ENCODE measurements at regions of chr15 and their contacts with region 1.

Region 1: GRCh38 chr15:65304389-65305144 is at the start of gene RNU5B-1:
- DNase-seq: peak; percentile 90
- ATAC-seq: peak; percentile 73
- H3K4me3 Mint-ChIP-seq: peak within 1 kb of the TSS; percentile 92
- H3K27ac Mint-ChIP-seq: peak within 1 kb of the TSS; percentile 95
- H3K4me1 Mint-ChIP-seq: peaks cover 42% of the 10 kb centered on the region
- H3K27me3 Mint-ChIP-seq: no peaks in the 10 kb centered on the region
- total RNA-seq, gene RNU5B-1: 19.9 TPM in 1 of 2 experiments, not detected in the other

Region 2: GRCh38 chr15:64979252-64979710 is 325.3 kb before region 1 on chr15:
- CTCF ChIA-PET with region 1: no interaction called
- POLR2A ChIA-PET with region 1: no interaction called
- DNase-seq: no peak
- ATAC-seq: no peak
- H3K4me3 Mint-ChIP-seq: no peak overlapping the region
- H3K27ac Mint-ChIP-seq: no peak overlapping the region
- H3K4me1 Mint-ChIP-seq: peaks cover 10% of the 10 kb centered on the region
- H3K27me3 Mint-ChIP-seq: no peaks in the 10 kb centered on the region

Region 3: DNA sequence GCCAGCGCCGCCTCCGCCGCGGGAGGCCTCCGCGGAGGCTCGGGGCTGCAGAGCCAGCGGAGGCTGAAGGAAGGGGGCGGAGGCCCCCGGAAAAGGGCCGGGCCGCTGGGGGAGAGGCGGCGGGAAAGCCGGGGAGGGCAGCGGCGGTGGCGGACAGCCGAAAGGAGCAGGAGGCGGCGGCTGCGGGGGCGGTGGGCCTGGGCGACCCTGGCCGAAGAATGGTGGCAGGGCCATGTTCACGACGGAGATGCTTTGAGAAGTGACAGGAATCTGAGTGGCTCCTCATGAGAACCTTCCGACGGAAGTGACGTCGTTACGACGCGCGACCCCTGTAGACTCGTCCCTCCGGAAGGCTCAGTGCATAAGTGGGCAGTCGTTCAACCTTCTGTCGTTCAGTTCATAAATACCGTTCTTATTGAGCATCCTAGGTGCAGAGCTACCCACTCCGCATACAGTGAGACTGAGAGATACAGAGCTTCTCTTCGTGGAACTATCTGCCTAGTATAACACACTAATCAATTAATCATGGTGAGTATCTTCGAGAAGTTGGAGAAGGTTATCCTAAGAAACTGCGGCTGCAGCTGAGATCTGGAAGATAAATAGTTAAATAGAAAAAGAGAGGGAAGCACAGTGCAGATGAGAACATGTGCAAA is 170.9 kb before region 1 on chr15 and contains the start of gene PDCD7:
- CTCF ChIA-PET with region 1: no interaction called
- POLR2A ChIA-PET with region 1: interaction called, 11 read pairs
- DNase-seq: peak; percentile 93
- ATAC-seq: peak; percentile 95
- H3K4me3 Mint-ChIP-seq: peak within 1 kb of the TSS; percentile 90
- H3K27ac Mint-ChIP-seq: peak within 1 kb of the TSS; percentile 97
- H3K4me1 Mint-ChIP-seq: peaks cover 19% of the 10 kb centered on the region
- H3K27me3 Mint-ChIP-seq: no peaks in the 10 kb centered on the region
- total RNA-seq, gene PDCD7: 31.5 to 34.9 TPM

Region 4: GRCh38 chr15:65233696-65234095 is 70.9 kb before region 1 on chr15:
- CTCF ChIA-PET with region 1: no interaction called
- POLR2A ChIA-PET with region 1: no interaction called
- DNase-seq: no peak
- ATAC-seq: no peak
- H3K4me3 Mint-ChIP-seq: no peak overlapping the region
- H3K27ac Mint-ChIP-seq: no peak overlapping the region
- H3K4me1 Mint-ChIP-seq: no peaks in the 10 kb centered on the region
- H3K27me3 Mint-ChIP-seq: no peaks in the 10 kb centered on the region

Region 5: GRCh38 chr15:65286704-65287519 is 17.7 kb before region 1 on chr15 and contains the start of gene PARP16:
- CTCF ChIA-PET with region 1: interaction called, 11 read pairs
- POLR2A ChIA-PET with region 1: interaction called, 115 read pairs
- DNase-seq: peak; percentile 95
- ATAC-seq: peak; percentile 98
- H3K4me3 Mint-ChIP-seq: peak within 1 kb of the TSS; percentile 86
- H3K27ac Mint-ChIP-seq: peak within 1 kb of the TSS; percentile 80
- H3K4me1 Mint-ChIP-seq: peaks cover 29% of the 10 kb centered on the region
- H3K27me3 Mint-ChIP-seq: no peaks in the 10 kb centered on the region
- total RNA-seq, gene PARP16: 17.0 to 19.3 TPM

Region 6: GRCh38 chr15:65318870-65319356 is 14.3 kb after region 1 on chr15:
- CTCF ChIA-PET with region 1: interaction called, 11 read pairs
- POLR2A ChIA-PET with region 1: interaction called, 43 read pairs
- DNase-seq: peak; percentile 82
- ATAC-seq: peak; percentile 99
- H3K4me3 Mint-ChIP-seq: no peak overlapping the region
- H3K27ac Mint-ChIP-seq: no peak overlapping the region
- H3K4me1 Mint-ChIP-seq: no peaks in the 10 kb centered on the region
- H3K27me3 Mint-ChIP-seq: peaks cover 14% of the 10 kb centered on the region

Region 7: GRCh38 chr15:65869127-65869953 is 564.8 kb after region 1 on chr15 and contains the start of gene RAB11A:
- CTCF ChIA-PET with region 1: no interaction called
- POLR2A ChIA-PET with region 1: interaction called, 10 read pairs
- DNase-seq: peak; percentile 98
- ATAC-seq: peak; percentile 94
- H3K4me3 Mint-ChIP-seq: peak within 1 kb of the TSS; percentile 99
- H3K27ac Mint-ChIP-seq: peak within 1 kb of the TSS; percentile 94
- H3K4me1 Mint-ChIP-seq: peaks cover 28% of the 10 kb centered on the region
- H3K27me3 Mint-ChIP-seq: peaks cover 4% of the 10 kb centered on the region
- total RNA-seq, gene RAB11A: 163 to 168 TPM